ENCODE measurements at regions of chr13 and their contacts with region 1.

Region 1: GRCh38 chr13:95267662-95268342 is 33.4 kb downstream of the ABCC4 start:
- DNase-seq: peak; percentile 76 to 85
- ATAC-seq: peak; percentile 75 to 89
- H3K4me3 ChIP-seq: peak overlapping the region; percentile 18; the same call in 2 of the 3 replicates
- H3K27ac ChIP-seq: peak overlapping the region; percentile 97 to 98
- H3K4me1 ChIP-seq: peaks cover 69% of the 10 kb centered on the region
- CTCF ChIP-seq: no peak
- EP300 ChIP-seq: peak; percentile 69 to 80; a peak in 3 of 5 replicates
- POLR2A ChIP-seq: no peak
- RAD21 ChIP-seq: no peak; a peak in 2 of 5 replicates

Region 2: GRCh38 chr13:95256086-95256485 is 11.7 kb before region 1 on chr13:
- CTCF ChIA-PET with region 1: interaction called, 3 read pairs
- POLR2A ChIA-PET with region 1: interaction called, 11 read pairs
- DNase-seq: peak; percentile 39 to 87
- ATAC-seq: peak; percentile 88
- H3K4me3 ChIP-seq: no peak overlapping the region
- H3K27ac ChIP-seq: peak overlapping the region; percentile 92 to 93
- H3K4me1 ChIP-seq: peaks cover 93% of the 10 kb centered on the region
- CTCF ChIP-seq: no peak
- EP300 ChIP-seq: peak; percentile 88 to 95; a peak in 4 of 5 replicates
- POLR2A ChIP-seq: no peak
- RAD21 ChIP-seq: peak; percentile 23 to 38; a peak in 1 of 5 replicates

Region 3: DNA sequence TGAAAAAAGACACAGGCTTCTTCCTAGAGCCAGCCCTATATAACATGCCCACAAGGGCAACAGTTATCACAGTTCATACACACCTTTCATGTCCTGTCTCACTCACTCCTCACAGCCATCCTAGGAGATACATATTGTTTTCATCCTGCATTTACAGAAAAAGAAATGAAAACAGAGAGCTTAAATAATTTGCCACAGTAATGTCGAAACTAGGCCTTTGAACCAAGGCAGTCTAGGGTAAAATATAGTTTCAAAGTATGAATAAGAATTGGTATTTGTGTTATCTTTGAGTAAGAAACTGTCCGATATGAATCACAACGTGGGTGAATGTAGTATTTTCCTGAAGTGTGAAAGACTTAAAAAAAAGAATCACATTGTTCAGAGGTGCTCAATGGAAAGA is 311.5 kb after region 1 on chr13:
- CTCF ChIA-PET with region 1: no interaction called
- POLR2A ChIA-PET with region 1: no interaction called
- DNase-seq: no peak
- ATAC-seq: no peak
- H3K4me3 ChIP-seq: no peak overlapping the region
- H3K27ac ChIP-seq: no peak overlapping the region
- H3K4me1 ChIP-seq: no peaks in the 10 kb centered on the region
- CTCF ChIP-seq: no peak
- EP300 ChIP-seq: no peak
- POLR2A ChIP-seq: no peak
- RAD21 ChIP-seq: no peak